ENCODE measurements at regions of chr17 and their contacts with region 1.

Region 1: GRCh38 chr17:50114849-50115357 is 15.1 kb downstream of the SAMD14 start:
- DNase-seq: peak in 1 of 2 experiments; percentile 66
- H3K4me3 ChIP-seq: no peak overlapping the region
- H3K27ac ChIP-seq: no peak overlapping the region
- H3K4me1 ChIP-seq: peaks cover 6 to 14% (median 11%) of the 10 kb centered on the region in 4 experiments
- H3K27me3 ChIP-seq: peaks cover 0 to 18% (median 12%) of the 10 kb centered on the region in 4 experiments; a peak in 5 of 7 replicates
- CTCF ChIP-seq: peak in 2 of 3 experiments; percentile 89 to 93; a peak in 3 of 4 replicates
- EP300 ChIP-seq: no peak
- POLR2A ChIP-seq: no peak
- RAD21 ChIP-seq: peak; percentile 68 to 73

Region 2: DNA sequence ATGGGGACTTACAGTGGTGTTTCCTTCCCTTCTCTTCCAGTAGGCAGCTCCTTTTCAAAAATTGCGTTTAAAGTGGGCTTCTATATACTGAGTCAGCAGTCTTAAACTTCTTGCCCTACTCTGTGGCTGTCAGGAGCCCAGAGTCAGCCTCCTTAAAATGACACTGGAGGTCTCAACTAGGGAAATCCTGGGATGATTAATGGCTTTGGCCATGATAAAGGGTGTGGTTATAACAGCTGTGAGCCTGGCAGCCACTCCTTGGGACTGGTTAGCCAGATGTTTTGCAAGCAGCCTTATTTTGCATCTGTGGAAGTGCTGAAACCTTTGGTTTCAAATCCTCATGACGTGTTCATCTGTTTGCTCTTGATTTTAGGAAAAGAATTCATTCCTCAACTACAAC is 292.1 kb before region 1 on chr17:
- CTCF ChIA-PET with region 1: no interaction called
- POLR2A ChIA-PET with region 1: no interaction called
- DNase-seq: no peak
- H3K4me3 ChIP-seq: no peak overlapping the region
- H3K27ac ChIP-seq: no peak overlapping the region
- H3K4me1 ChIP-seq: peaks cover 0 to 11% (median 7%) of the 10 kb centered on the region in 4 experiments; a peak in 5 of 7 replicates
- H3K27me3 ChIP-seq: no peaks in the 10 kb centered on the region
- CTCF ChIP-seq: no peak
- EP300 ChIP-seq: no peak
- POLR2A ChIP-seq: no peak
- RAD21 ChIP-seq: no peak

Region 3: DNA sequence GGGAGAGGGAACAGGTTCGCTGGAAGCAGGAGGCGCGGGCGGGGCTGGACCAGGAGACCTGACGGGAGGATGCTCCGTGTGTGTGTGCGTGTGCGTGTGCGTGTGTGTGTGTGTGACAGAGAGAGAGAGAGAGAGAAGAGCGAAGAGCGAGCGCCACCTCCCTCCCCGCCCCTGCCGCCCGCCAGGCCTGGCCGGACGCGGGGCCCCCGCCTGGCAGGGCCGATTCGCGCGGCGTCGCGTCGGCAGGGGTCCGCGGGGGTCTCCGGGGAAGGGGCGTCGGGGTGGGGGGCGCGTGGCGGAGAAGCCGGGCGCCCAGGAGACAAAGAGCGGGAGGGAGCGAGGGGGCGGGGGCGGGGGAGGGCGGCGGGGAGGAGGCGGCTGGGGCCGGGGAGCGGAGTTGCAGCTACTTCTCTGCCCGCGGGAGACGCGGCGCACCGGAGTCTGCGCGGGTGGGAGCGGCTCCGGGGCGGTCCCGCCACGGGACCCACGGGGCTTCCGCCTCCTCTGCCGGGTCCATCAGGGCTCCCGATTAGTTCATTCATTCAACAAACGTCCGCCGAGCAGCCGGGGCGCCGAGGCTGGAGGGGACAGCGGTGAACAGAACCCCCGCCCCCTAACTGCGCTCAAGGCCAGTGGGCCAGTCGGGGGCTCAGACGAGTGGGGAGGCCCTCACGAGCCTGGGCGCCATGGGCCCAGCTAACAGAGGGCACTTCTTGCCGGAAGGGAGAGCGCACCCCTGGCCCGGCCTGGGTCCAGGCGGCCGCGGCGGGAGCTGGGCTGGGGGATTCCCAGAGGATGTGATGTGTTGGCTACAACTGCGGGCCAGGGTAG is 15.0 kb after region 1 on chr17 and contains the start of gene SAMD14:
- CTCF ChIA-PET with region 1: interaction called, 38 read pairs
- POLR2A ChIA-PET with region 1: interaction called, 11 read pairs
- DNase-seq: no peak
- H3K4me3 ChIP-seq: peak within 1 kb of the TSS; percentile 37 to 97 (median 74)
- H3K27ac ChIP-seq: no peak within 1 kb of the TSS
- H3K4me1 ChIP-seq: peaks cover 8 to 34% (median 30%) of the 10 kb centered on the region in 4 experiments
- H3K27me3 ChIP-seq: peaks cover 0 to 11% (median 2%) of the 10 kb centered on the region in 4 experiments; a peak in 4 of 7 replicates
- CTCF ChIP-seq: no peak
- EP300 ChIP-seq: no peak
- POLR2A ChIP-seq: no peak
- RAD21 ChIP-seq: no peak
- total RNA-seq, gene SAMD14: 5.8 and 5.9 TPM in 2 replicates